Prostate gland (tissue), 2 donors: ENCODE measurements at regions of chrX and their contacts with region 1.

Region 1: GRCh38 chrX:21853578-21853977 is 2.2 kb upstream of the YY2 start:
- DNase-seq: no peak
- H3K4me3 ChIP-seq: no peak overlapping the region
- H3K27ac ChIP-seq: no peak overlapping the region
- H3K4me1 ChIP-seq: no peaks in the 10 kb centered on the region
- H3K27me3 ChIP-seq: no peaks in the 10 kb centered on the region
- CTCF ChIP-seq: no peak
- POLR2A ChIP-seq: no peak

Region 2: DNA sequence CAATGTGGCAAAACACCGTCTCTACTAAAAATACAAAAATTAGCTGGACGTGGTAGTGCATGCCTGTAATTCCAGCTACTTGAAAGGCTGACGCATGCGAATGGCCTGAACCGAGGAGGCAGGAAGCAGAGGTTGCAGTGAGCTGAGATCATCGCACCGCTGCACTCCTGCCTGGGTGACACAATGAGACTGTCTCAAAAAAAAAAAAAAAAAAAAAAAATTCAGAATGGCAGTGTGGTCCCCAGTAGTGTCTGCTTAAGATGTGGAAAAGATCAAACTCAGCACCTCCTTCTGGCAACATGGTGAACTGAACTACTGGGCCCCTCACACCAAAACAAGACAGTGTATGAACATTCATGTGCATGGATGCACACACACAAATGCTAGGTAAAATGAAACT is 119.1 kb after region 1 on chrX:
- intact Hi-C with region 1: loop called (anchors 5 kb)
- DNase-seq: no peak
- H3K4me3 ChIP-seq: no peak overlapping the region
- H3K27ac ChIP-seq: no peak overlapping the region
- H3K4me1 ChIP-seq: no peaks in the 10 kb centered on the region
- H3K27me3 ChIP-seq: no peaks in the 10 kb centered on the region
- CTCF ChIP-seq: no peak
- POLR2A ChIP-seq: no peak